Activated CD4-positive, alpha-beta T cell treated with anti-CD3 and anti-CD28 coated beads, Interleukin-2, amount 10 ng/mL, durations not matched to agents 24 days and 14 days (primary cell): ENCODE measurements at regions of chr12 and their contacts with region 1.

Region 1: DNA sequence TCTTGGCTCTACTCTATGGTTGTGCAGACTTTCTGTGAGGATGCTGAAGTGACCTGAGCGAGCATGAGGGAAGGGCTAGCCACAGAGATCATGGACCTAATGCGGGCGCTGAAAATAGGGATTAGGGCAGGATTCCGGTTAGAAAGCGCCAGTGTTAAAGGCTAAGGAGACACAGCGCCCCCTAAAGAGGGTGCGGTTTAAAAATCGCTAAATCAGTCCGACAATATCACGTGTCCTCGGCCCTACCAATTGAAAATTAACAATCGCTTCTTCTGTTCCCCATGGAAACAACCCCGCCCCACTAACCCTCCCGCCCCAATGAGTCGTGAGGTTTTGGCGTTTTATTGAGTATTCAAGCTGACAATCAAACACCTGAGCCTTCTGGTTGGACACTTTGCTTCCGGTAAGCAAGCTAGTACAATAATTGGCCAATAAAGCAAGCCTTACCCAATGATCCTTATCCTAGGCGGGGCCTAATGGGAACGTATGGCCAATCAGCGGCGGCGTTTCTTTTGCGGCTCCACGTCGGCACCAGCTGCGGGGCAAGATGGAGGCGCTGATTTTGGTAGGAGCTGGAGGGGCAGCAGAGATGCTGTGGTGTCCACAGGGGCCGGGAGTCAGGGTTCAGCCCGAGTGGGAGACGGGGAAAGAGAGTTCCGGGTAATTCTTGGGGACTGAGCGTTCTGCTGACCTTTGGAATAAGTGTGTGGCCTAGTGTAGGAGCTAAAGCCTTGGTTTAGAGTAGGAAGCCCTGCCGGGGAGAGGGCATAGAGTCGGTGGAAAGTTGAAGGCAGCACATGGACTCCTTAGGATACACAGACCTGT is at the start of gene COPZ1:
- DNase-seq: peak; percentile 97
- H3K4me3 Mint-ChIP-seq: peak within 1 kb of the TSS; percentile 98
- H3K27ac Mint-ChIP-seq: peak within 1 kb of the TSS; percentile 93
- H3K4me1 Mint-ChIP-seq: peaks cover 23% of the 10 kb centered on the region
- H3K27me3 Mint-ChIP-seq: no peaks in the 10 kb centered on the region
- total RNA-seq, gene COPZ1: 116 and 121 TPM in 2 replicates

Region 2: GRCh38 chr12:54352022-54352531 is 27.2 kb after region 1 on chr12:
- intact Hi-C with region 1: loop called (anchors 1 kb)
- DNase-seq: peak; percentile 72
- H3K4me3 Mint-ChIP-seq: peak overlapping the region; percentile 71
- H3K27ac Mint-ChIP-seq: peak overlapping the region; percentile 72
- H3K4me1 Mint-ChIP-seq: peaks cover 32% of the 10 kb centered on the region
- H3K27me3 Mint-ChIP-seq: no peaks in the 10 kb centered on the region